Activated CD4-positive, alpha-beta memory T cell treated with anti-CD3 and anti-CD28 coated beads for 36 hours (primary cell): ENCODE measurements at regions of chr19 and their contacts with region 1.

Region 1: DNA sequence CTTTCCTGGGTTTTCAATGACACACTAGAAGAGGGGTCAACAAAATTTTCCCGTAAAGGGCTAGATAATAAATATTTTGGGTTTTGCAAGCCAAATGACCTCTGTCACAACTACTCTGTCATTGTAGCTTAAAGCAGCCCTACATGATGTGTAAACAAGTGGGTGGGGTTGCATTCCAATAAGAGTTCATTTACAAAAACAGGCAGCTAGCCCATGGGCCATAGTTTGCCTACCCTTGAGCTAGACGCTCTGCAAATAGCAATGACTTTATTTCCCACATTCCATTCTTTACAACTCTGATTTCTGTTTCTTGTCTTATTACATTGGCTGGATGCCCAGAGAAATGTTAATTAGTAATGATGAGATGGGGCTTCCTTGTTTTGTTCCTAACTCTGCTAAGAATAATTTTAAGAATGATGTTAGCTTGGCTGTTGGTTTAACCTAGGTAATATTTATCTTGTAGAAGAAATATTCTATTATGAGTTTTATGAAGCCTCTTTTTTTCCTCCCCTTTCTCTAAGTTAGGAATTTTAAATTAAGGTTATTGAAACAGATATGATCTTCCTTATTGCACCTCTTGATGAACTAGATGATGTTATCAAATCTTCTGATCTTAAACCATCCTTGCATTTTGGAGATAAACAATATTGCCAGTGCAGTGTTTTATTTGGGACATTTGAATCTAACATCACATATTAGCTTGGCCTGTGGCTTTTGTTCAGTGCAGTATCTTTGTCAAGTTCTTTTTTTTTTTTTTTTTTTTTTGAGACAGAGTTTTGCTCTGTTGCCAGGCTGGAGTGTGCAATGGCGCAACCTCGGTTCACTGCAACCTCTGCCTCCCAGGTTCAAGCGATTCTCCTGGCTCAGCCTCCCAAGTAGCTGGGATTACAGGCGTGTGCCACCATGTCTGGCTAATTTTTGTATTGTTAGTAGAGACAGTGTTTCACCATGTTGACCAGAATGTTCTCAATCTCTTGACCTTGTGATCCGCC is 76.3 kb downstream of the ZNF557 start:
- DNase-seq: no peak
- H3K4me3 Mint-ChIP-seq: no peak overlapping the region
- H3K27ac Mint-ChIP-seq: no peak overlapping the region
- H3K4me1 Mint-ChIP-seq: no peaks in the 10 kb centered on the region
- H3K27me3 Mint-ChIP-seq: no peaks in the 10 kb centered on the region

Region 2: GRCh38 chr19:7326105-7326877 is 180.5 kb after region 1 on chr19:
- CTCF ChIA-PET with region 1: interaction called, 20 read pairs
- POLR2A ChIA-PET with region 1: no interaction called
- intact Hi-C with region 1: no loop called
- DNase-seq: peak; percentile 63
- H3K4me3 Mint-ChIP-seq: no peak overlapping the region
- H3K27ac Mint-ChIP-seq: no peak overlapping the region
- H3K4me1 Mint-ChIP-seq: no peaks in the 10 kb centered on the region
- H3K27me3 Mint-ChIP-seq: peaks cover under 1% of the 10 kb centered on the region

Region 3: DNA sequence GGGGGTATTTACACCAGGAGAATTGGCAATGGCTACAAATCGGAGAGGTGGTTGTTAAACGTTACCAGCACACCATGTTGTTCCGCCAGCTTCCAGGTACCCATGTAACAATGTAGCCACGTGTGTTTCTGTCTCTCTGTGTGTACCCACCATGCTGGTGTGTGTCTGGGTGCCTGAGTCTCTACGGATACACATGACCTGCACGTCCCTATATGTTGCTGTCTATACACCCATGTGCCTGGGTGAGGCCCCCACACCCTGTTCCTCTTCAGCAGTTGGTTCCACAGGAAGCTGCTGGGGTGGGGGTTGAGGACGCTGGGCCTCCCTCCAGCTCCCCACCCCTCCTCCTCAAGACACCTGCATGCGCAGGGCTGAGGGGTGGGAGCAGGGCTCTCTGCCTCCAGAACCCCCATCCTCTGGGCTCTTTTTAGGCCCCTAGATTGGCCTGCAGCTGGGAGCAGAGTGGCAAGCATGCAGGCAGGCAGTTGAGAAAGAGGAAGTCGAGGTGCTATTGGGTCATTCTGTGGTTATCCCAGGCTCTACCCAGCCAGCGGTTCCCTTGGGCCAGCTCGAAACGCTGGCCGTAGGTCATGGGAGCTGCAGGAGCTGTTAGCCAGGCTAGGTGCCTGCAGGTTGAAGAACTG is 202.9 kb after region 1 on chr19 and contains the start of gene ARHGEF18:
- CTCF ChIA-PET with region 1: interaction called, 10 read pairs
- POLR2A ChIA-PET with region 1: no interaction called
- intact Hi-C with region 1: no loop called
- DNase-seq: peak; percentile 66
- H3K4me3 Mint-ChIP-seq: peak within 1 kb of the TSS; percentile 79
- H3K27ac Mint-ChIP-seq: peak within 1 kb of the TSS; percentile 94
- H3K4me1 Mint-ChIP-seq: peaks cover 53% of the 10 kb centered on the region
- H3K27me3 Mint-ChIP-seq: no peaks in the 10 kb centered on the region
- total RNA-seq, gene ARHGEF18: 36.9 to 37.1 TPM

Region 4: DNA sequence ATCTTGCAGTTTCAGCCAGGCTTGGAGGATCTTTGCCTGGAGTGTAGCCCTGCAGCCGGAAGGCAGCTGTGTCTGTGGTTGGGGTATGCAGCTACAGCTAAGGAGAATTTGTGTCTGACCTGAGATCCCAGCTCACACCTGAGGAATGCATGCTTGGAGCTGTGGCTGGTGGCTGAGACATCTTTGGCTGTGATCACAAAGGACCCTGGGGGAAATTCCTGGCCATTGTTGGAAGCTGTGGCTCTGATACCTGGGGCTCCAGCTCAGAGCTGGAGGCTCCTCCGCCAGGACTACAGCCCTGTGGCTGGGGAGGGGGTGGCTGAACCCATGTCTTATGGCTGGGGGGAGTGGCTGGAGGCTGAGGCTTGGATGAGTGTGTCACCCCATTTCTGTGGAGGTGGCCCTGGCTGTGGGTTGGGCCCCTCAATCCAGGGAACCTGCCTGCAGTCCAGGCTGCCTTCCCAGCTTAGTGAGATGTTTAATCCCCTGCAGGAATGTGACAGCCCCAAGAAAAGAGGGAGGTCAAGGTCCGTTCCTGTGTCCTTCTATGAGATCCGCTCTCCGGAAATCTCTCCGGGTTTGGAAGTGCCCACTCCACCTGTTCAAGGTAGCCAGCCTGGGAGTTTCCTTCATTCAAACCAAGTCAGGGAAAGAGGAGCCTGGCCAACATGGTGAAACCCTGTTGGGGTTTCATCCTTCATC is 230.5 kb after region 1 on chr19:
- CTCF ChIA-PET with region 1: no interaction called
- POLR2A ChIA-PET with region 1: no interaction called
- intact Hi-C with region 1: loop called (anchors 1 kb)
- DNase-seq: no peak
- H3K4me3 Mint-ChIP-seq: no peak overlapping the region
- H3K27ac Mint-ChIP-seq: no peak overlapping the region
- H3K4me1 Mint-ChIP-seq: peaks cover 6% of the 10 kb centered on the region
- H3K27me3 Mint-ChIP-seq: no peaks in the 10 kb centered on the region